ENCODE measurements at regions of chr11 and their contacts with region 1.

Region 1: GRCh38 chr11:46382589-46383403 is 1.3 kb downstream of the MDK start:
- DNase-seq: no peak
- H3K4me3 ChIP-seq: peak overlapping the region; percentile 64
- CTCF ChIP-seq: peak; percentile 65

Region 2: GRCh38 chr11:46149342-46149741 is 233.5 kb before region 1 on chr11:
- CTCF ChIA-PET with region 1: no interaction called
- POLR2A ChIA-PET with region 1: no interaction called
- DNase-seq: no peak
- H3K4me3 ChIP-seq: no peak overlapping the region
- CTCF ChIP-seq: no peak

Region 3: GRCh38 chr11:46367244-46367915 is 15.4 kb before region 1 on chr11:
- CTCF ChIA-PET with region 1: interaction called, 39 read pairs
- POLR2A ChIA-PET with region 1: no interaction called
- DNase-seq: no peak
- H3K4me3 ChIP-seq: no peak overlapping the region
- CTCF ChIP-seq: peak; percentile 89

Region 4: GRCh38 chr11:46404476-46405017 is 21.8 kb after region 1 on chr11:
- CTCF ChIA-PET with region 1: interaction called, 34 read pairs
- POLR2A ChIA-PET with region 1: no interaction called
- DNase-seq: no peak
- H3K4me3 ChIP-seq: no peak overlapping the region
- CTCF ChIP-seq: no peak

Measured in AG04449 (cell line).